Mammary epithelial cell (primary cell): ENCODE measurements at regions of chrX and their contacts with region 1.

Region 1: GRCh38 chrX:120250522-120251271 is at the start of gene ZBTB33:
- DNase-seq: peak; percentile 91
- H3K4me3 ChIP-seq: peak within 1 kb of the TSS; percentile 44 to 72 (median 64)
- H3K27ac ChIP-seq: peak within 1 kb of the TSS; percentile 70
- H3K4me1 ChIP-seq: no peaks in the 10 kb centered on the region
- H3K27me3 ChIP-seq: no peaks in the 10 kb centered on the region
- CTCF ChIP-seq: peak; percentile 24 to 65
- total RNA-seq, gene ZBTB33: 12.0 to 19.7 TPM

Region 2: GRCh38 chrX:120468825-120469525 is 218.3 kb after region 1 on chrX and contains the start of gene LAMP2:
- CTCF ChIA-PET with region 1: no interaction called
- dilution Hi-C with region 1: no loop called
- in situ Hi-C with region 1: no loop called
- intact Hi-C with region 1: loop called (anchors 2 kb)
- DNase-seq: peak; percentile 80
- H3K4me3 ChIP-seq: peak within 1 kb of the TSS; percentile 59 to 80 (median 61)
- H3K27ac ChIP-seq: peak within 1 kb of the TSS; percentile 83
- H3K4me1 ChIP-seq: peaks cover 8% of the 10 kb centered on the region
- H3K27me3 ChIP-seq: no peaks in the 10 kb centered on the region
- CTCF ChIP-seq: no peak
- total RNA-seq, gene LAMP2: 146 to 475 TPM

Region 3: GRCh38 chrX:120575379-120576114 is 324.9 kb after region 1 on chrX:
- CTCF ChIA-PET with region 1: no interaction called
- dilution Hi-C with region 1: no loop called
- in situ Hi-C with region 1: no loop called
- intact Hi-C with region 1: no loop called
- DNase-seq: no peak
- H3K4me3 ChIP-seq: no peak overlapping the region
- H3K27ac ChIP-seq: no peak overlapping the region
- H3K4me1 ChIP-seq: no peaks in the 10 kb centered on the region
- H3K27me3 ChIP-seq: no peaks in the 10 kb centered on the region
- CTCF ChIP-seq: no peak